ENCODE measurements at regions of chr11 and their contacts with region 1.

Region 1: GRCh38 chr11:62860835-62861563 is 19.7 kb upstream of the SLC3A2 start:
- DNase-seq: no peak
- H3K4me3 ChIP-seq: no peak overlapping the region
- H3K27ac ChIP-seq: no peak overlapping the region
- H3K4me1 ChIP-seq: peaks cover 0 to 7% of the 10 kb centered on the region in 2 donors
- H3K27me3 ChIP-seq: no peaks in the 10 kb centered on the region
- CTCF ChIP-seq: no peak
- POLR2A ChIP-seq: no peak

Region 2: GRCh38 chr11:62394825-62395538 is 466.0 kb before region 1 on chr11:
- intact Hi-C with region 1: loop called (anchors 10 kb)
- DNase-seq: peak; percentile 85 to 89
- H3K4me3 ChIP-seq: no peak overlapping the region
- H3K27ac ChIP-seq: peak overlapping the region; percentile 34 to 61 (median 46)
- H3K4me1 ChIP-seq: peaks cover 0 to 11% of the 10 kb centered on the region in 2 donors
- H3K27me3 ChIP-seq: no peaks in the 10 kb centered on the region
- CTCF ChIP-seq: peak; percentile 50 to 83 (median 70)
- POLR2A ChIP-seq: no peak

Region 3: DNA sequence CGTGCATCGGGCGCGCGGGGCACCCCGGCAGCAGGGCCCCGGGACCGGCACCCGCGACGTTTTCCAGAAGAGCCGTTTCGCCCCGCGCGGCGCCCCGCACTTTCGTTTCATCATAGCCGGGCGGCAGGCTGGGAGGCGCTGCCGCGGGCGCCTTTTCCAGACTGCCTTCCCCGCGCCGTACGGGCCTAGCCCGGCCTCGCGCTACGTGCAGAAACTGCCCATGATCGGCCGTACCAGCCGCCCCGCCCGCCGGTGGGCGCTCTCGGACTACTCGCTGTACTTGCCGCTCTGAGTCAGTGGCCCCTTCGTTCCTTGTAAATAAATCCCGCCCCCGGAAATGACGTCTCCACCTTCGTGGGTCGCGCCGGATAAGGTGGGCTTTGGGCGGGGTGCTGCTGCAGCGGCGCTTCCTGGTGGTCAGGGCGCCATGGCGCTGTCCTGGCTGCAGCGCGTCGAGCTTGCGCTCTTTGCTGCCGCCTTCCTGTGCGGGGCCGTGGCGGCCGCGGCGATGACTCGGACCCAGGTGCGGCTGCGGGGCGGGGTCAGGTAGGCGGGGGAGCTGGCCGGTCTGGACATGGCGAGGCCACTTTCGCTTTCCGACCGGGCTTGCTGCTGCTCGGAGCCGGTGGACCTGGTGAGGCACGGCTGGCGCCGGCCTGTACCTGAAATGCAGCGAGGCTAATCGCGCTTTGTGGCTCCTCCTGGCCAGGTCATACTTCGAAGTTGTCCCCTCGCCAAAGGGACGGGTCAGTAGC is 73.8 kb before region 1 on chr11 and contains the start of gene TMEM179B:
- intact Hi-C with region 1: loop called (anchors 5 kb)
- DNase-seq: peak; percentile 98 to 99
- H3K4me3 ChIP-seq: peak within 1 kb of the TSS; percentile 25 to 97 (median 45)
- H3K27ac ChIP-seq: peak within 1 kb of the TSS; percentile 88 to 96 (median 95)
- H3K4me1 ChIP-seq: peaks cover 24 to 32% of the 10 kb centered on the region in 2 donors
- H3K27me3 ChIP-seq: no peaks in the 10 kb centered on the region
- CTCF ChIP-seq: peak in 4 of 6 experiments; percentile 21 to 48 (median 36)
- POLR2A ChIP-seq: peak; percentile 78 to 99
- total RNA-seq, gene TMEM179B: 78.6 to 126 (median 92.4) TPM

Measured in thyroid gland (tissue), 4 donors.